ENCODE measurements at regions of chr17 and their contacts with region 1.

Region 1: GRCh38 chr17:79220713-79221291 is 146.2 kb downstream of the ENGASE start:
- DNase-seq: no peak

Region 2: DNA sequence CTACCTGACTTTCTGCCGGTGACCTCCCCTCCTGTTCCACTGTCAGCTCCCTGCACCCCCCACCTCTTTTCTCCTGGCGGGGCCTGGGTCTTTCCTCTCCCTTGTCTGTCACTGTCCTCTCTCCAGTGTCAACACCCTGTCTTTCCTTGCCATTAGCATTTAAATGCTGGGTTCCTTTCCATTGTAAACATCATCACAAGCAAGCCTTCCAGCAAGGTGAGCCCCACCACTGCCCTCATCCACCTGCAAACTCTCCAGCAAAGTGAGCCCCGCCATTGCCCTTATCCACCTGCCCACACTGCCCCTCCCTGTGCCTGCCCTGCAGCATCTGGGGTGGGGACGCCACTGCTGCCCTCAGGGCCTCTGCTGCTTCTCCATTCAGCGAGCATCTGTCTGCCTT is 48.8 kb after region 1 on chr17:
- intact Hi-C with region 1: loop called in 1 of 2 experiments (anchors 2 kb)
- DNase-seq: no peak

Region 3: GRCh38 chr17:79280866-79281572 is 60.2 kb after region 1 on chr17:
- intact Hi-C with region 1: no loop called
- DNase-seq: no peak

Region 4: DNA sequence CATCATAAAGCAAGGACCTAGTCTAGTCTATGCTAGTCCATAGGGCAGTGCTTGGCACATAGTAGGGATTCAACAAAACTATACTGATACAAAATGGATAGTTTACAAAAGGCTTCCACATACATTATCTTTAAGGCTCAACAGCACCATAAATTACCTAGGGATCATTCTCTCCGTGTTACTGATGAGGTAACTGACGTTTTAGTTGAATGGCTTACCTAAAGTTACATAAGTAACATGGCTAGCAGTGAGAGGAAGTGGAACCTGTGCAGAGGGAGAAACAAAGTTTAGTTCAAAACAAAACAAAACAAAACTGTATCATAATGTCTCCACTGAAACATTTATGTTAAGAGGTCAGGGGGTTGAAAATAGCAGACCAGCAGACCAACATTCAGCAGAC is 1331.7 kb after region 1 on chr17:
- intact Hi-C with region 1: loop called in 1 of 2 experiments (anchors 5 kb)
- DNase-seq: no peak